A673 (cell line): ENCODE measurements at regions of chr4 and their contacts with region 1.

Region 1: DNA sequence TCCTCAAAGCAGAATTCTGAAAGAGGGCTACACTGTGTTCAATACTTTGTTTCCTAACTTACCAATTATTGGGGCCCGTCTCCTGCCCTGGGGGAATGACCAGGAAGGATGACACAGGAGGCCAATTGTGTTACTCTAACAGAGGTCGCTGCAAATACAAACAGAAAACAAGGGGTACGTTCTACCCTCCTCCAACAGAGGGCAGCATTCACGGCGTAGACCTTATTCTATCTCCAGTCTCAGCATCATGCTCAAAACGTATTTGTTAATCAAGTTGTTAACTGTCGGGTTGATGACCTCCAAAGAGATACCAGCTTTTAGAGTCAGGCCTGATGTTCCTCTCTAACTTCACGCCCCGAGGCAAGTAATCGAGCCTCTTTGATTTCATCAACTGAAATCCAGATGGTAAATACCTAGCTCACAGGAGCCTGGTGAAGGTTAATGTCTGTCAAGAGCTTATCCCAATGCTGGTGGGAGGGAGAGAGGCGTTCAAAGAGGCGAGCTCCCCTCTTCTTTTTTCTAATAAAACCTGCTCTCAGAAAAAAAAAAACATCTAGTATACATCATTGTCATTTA is 181.0 kb upstream of the KCNIP4 start:
- DNase-seq: peak; percentile 37
- H3K4me3 ChIP-seq: no peak overlapping the region
- H3K27ac ChIP-seq: no peak overlapping the region
- H3K4me1 ChIP-seq: no peaks in the 10 kb centered on the region
- H3K27me3 ChIP-seq: no peaks in the 10 kb centered on the region
- CTCF ChIP-seq: peak; percentile 56

Region 2: GRCh38 chr4:22202975-22203710 is 73.6 kb after region 1 on chr4:
- CTCF ChIA-PET with region 1: no interaction called
- POLR2A ChIA-PET with region 1: no interaction called
- intact Hi-C with region 1: no loop called
- DNase-seq: no peak
- H3K4me3 ChIP-seq: no peak overlapping the region
- H3K27ac ChIP-seq: no peak overlapping the region
- H3K4me1 ChIP-seq: no peaks in the 10 kb centered on the region
- H3K27me3 ChIP-seq: no peaks in the 10 kb centered on the region
- CTCF ChIP-seq: no peak

Region 3: DNA sequence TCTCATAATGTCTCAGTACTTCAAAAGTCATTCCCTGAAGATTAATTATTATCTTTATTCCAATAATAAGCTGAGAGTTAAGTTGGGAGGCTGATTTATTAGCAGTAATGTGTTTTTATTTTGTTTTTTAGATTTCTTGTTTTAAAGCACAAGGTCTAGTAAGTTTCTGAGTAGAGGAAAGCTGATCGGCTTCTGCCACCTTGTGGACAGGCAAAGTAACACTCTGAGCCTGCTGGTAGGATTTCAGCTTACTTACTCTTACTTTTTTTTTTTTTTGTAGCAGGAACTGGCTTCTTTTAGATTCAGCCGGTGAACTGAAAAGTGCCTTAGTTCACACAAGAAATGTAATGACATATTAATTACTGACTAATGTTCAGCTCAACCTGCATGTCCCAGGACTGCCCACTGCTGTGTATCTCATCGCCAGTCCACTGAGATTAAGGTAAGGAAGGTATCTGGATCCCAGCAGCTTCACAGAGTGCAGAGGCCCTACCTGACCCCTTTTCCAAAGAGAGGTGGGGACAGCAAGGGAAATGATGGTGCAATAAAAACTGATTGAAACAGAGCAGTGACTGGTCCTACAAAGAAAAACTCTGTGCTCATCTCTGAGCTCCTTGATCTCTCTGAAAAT is 259.8 kb after region 1 on chr4:
- CTCF ChIA-PET with region 1: no interaction called
- POLR2A ChIA-PET with region 1: no interaction called
- intact Hi-C with region 1: loop called (anchors 5 kb)
- DNase-seq: peak; percentile 65
- H3K4me3 ChIP-seq: no peak overlapping the region
- H3K27ac ChIP-seq: no peak overlapping the region
- H3K4me1 ChIP-seq: no peaks in the 10 kb centered on the region
- H3K27me3 ChIP-seq: no peaks in the 10 kb centered on the region
- CTCF ChIP-seq: peak; percentile 87

Region 4: DNA sequence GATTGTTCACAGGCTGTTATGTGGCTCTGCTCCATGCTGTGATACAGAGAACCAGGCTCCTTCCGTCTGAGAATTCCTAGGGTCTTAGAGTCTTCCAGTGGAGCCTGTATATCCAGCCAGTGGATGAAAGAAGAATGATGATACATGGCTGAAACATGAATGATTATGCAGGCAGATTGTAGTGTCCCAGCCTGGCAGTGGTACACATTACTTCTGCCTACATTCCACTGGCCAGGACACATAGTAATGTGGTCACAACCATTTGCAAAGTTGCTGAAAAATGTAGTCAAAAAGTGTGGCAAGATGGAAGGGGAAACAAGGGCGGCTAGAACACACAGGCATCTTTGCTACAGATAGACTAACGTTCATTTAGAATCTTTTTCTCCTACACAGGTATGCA is 558.7 kb after region 1 on chr4:
- CTCF ChIA-PET with region 1: no interaction called
- POLR2A ChIA-PET with region 1: no interaction called
- intact Hi-C with region 1: loop called (anchors 10 kb)
- DNase-seq: no peak
- H3K4me3 ChIP-seq: no peak overlapping the region
- H3K27ac ChIP-seq: no peak overlapping the region
- H3K4me1 ChIP-seq: no peaks in the 10 kb centered on the region
- H3K27me3 ChIP-seq: peaks cover 37% of the 10 kb centered on the region
- CTCF ChIP-seq: no peak

Region 5: GRCh38 chr4:22703912-22704311 is 574.4 kb after region 1 on chr4:
- CTCF ChIA-PET with region 1: no interaction called
- POLR2A ChIA-PET with region 1: no interaction called
- intact Hi-C with region 1: loop called (anchors 5 kb)
- DNase-seq: no peak
- H3K4me3 ChIP-seq: no peak overlapping the region
- H3K27ac ChIP-seq: no peak overlapping the region
- H3K4me1 ChIP-seq: no peaks in the 10 kb centered on the region
- H3K27me3 ChIP-seq: no peaks in the 10 kb centered on the region
- CTCF ChIP-seq: no peak